Posterior vena cava (tissue), 2 donors: ENCODE measurements at regions of chr12 and their contacts with region 1.

Region 1: DNA sequence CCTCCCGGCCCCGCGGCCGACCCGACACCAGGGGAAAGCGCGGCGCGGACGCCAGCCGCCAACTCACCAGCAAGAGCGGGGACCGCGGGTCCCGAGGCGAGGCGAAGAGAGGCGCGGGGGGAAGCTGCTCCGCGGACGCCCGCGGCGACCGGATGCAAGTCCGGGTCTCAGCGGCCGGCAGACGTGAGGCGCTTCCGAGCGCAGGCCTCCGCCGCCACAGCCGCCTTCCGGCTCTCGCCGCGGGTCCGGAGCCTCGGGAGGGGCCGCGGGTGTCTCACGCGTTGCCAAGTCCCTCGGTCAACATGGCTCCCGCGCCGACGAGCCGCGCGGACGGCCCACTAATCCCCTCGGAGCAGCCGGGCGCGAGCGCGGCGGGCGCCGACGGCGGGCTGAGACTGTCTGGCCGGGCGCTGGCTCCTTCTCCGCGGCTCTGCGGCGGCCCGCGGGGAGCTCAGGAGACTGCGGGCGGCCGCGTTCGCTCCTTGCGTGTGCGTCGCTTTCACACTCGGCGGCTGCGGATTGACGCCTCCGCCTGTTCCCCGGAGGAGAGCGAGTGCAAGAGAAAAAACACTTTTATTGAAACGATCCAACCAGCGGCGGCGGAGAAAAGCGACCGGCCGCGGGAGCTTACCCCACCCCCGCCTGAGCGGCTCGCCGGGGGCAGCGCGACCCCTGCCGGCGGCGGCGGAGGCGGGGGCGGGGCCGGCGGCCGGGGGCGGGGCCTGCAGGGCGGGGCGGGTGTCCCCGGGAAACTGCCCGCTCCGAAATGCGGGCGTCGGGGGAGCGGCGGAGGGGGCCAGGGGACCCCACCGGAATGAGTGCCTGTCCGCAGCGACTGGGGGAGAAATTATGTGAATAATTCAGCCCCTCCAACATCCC is at the start of gene CDK17:
- DNase-seq: peak; percentile 95
- total RNA-seq, gene CDK17: 46.4 to 50.1 TPM

Region 2: DNA sequence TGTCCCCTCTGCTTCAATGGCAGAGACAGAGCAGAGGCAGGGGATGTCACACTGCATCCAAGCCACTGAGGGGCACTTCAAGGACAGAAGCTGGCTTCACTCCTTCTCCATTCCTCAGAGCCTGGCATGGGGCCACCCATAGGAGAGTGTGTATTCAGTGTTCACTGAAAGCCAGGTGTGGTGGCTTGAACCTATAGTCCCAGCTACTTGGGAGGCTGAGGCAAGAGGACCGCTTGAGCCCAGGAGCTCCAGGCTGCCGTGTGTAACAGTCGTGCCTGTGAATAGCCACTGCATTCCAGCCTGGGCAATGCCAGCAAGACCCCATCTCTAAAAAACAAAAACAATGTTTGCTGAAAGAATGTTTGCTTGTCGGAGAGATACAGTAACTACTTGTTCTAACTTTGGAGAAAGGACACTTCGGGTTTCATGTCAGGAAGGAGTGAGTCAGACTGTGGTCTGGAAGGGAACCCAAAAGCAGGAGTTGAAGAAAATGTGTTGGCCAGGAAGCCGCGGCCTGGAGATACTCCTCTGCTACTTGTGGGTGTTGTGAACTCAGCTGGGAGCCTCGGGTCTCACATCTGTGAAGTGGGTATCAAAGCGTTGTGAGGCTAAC is 162.6 kb before region 1 on chr12:
- intact Hi-C with region 1: loop called (anchors 5 to 10 kb)
- DNase-seq: peak; percentile 91